Calu3 (cell line): ENCODE measurements at regions of chr11 and their contacts with region 1.

Region 1: DNA sequence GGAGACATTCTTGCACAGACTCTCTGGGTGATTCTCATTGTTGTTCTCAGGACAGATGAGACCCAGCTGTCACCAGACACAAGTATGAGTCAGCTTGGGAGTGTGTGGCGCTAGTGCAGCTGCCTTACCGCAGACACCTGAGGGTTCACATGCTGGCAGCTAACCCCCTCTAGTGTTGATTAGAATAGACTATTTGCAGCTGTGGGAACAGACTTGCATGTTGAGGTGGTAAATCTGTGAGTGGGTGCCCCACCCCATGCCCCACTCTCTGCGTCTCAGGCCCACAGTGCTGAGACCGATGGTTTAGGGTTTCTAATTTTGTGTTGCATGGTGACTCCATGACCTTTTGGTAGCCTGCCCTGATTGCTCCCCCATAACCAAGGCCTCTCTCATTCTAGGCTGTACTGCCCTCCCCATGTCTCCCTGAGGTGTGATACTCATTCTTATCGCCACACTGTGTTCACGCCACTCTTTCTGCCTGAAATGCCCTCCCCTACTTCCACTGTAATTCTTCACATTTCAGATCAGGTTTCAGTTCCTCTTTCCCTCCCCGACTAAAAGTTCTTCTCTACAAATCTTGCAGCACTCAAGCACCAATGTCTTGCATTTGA is 73.7 kb upstream of the KIRREL3 start:
- DNase-seq: peak; percentile 60
- H3K4me3 Mint-ChIP-seq: no peak overlapping the region
- H3K27ac Mint-ChIP-seq: no peak overlapping the region
- H3K4me1 Mint-ChIP-seq: peaks cover 15% of the 10 kb centered on the region
- H3K27me3 Mint-ChIP-seq: no peaks in the 10 kb centered on the region
- CTCF ChIP-seq: peak; percentile 28

Region 2: GRCh38 chr11:126732981-126733380 is 341.3 kb before region 1 on chr11:
- CTCF ChIA-PET with region 1: no interaction called
- intact Hi-C with region 1: no loop called
- DNase-seq: no peak
- H3K4me3 Mint-ChIP-seq: no peak overlapping the region
- H3K27ac Mint-ChIP-seq: no peak overlapping the region
- H3K4me1 Mint-ChIP-seq: no peaks in the 10 kb centered on the region
- H3K27me3 Mint-ChIP-seq: peaks cover 43% of the 10 kb centered on the region
- CTCF ChIP-seq: no peak

Region 3: DNA sequence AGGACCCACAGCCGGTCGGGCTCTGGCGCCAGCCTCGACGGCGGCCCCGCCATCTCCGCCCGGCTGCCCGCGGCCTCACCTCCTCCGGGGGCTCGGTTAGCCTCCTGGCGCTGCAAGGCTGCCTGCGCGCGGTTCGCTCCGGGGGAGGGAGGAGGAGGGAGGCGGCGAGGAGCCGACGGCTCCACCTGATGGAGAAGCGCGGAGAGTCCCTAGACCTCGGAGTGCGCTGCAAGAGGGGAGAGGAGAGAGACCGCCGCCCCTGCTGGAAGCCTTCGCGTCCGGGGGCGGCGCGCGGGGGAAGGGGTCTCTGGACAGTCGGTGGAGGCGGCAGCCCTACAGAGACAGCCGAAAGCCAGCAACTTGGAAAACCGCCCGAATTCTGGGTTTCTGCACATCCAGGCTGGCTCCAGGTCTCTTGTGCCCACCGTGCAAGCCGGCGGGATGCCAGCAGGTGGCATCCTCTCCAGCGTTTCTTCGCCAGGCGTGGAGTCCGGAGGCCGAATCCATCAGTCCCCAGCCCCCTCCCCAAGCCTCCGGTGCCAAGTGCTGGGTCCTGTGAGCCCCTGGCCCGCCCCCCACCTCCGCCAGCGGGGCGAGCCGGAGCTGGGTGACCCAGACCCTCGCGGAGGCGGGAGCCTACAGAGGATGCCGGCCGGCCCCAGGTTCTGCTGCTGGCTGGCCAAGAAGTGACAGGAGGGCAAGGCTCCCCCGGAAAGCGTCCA is 70.8 kb before region 1 on chr11:
- CTCF ChIA-PET with region 1: interaction called, 5 read pairs
- intact Hi-C with region 1: loop called (anchors 1 kb)
- DNase-seq: peak; percentile 66
- H3K4me3 Mint-ChIP-seq: peak overlapping the region; percentile 65
- H3K27ac Mint-ChIP-seq: no peak overlapping the region
- H3K4me1 Mint-ChIP-seq: peaks cover 11% of the 10 kb centered on the region
- H3K27me3 Mint-ChIP-seq: no peaks in the 10 kb centered on the region
- CTCF ChIP-seq: peak; percentile 47

Region 4: DNA sequence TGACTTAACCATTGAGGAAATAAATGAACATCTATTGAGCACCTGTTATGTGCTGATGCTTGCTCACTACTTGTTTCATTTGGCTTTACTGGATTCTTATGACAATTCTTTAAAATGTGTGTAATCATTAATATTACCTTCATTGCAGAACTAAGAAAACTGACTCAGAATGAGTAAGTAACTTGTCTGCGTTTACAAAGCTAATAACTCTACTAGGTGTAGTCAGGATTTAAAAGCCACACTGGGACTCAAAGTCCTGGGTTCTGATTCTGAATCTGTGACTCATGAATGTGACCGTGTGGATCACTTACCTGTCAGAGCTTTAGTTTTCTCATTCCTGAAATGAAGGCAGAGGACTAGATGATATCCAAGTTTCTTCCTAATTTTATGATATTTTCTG is 50.3 kb before region 1 on chr11:
- CTCF ChIA-PET with region 1: no interaction called
- intact Hi-C with region 1: loop called (anchors 5 kb)
- DNase-seq: no peak
- H3K4me3 Mint-ChIP-seq: peak overlapping the region; percentile 46
- H3K27ac Mint-ChIP-seq: peak overlapping the region; percentile 95
- H3K4me1 Mint-ChIP-seq: peaks cover 12% of the 10 kb centered on the region
- H3K27me3 Mint-ChIP-seq: no peaks in the 10 kb centered on the region
- CTCF ChIP-seq: no peak